Aorta (tissue), 5 donors: ENCODE measurements at regions of chr7 and their contacts with region 1.

Region 1: GRCh38 chr7:6706677-6707544 is at the start of gene ZNF12:
- DNase-seq: peak; percentile 99
- ATAC-seq: peak; percentile 99
- H3K4me3 ChIP-seq: peak within 1 kb of the TSS; percentile 73 to 96
- H3K27ac ChIP-seq: peak within 1 kb of the TSS in 1 of 2 donors; percentile 22
- H3K4me1 ChIP-seq: no peaks in the 10 kb centered on the region
- H3K27me3 ChIP-seq: no peaks in the 10 kb centered on the region
- total RNA-seq, gene ZNF12: 23.5 to 26.7 TPM

Region 2: GRCh38 chr7:6430271-6430940 is 276.5 kb before region 1 on chr7:
- intact Hi-C with region 1: no loop called
- DNase-seq: no peak
- ATAC-seq: no peak
- H3K4me3 ChIP-seq: no peak overlapping the region
- H3K27ac ChIP-seq: no peak overlapping the region
- H3K4me1 ChIP-seq: no peaks in the 10 kb centered on the region
- H3K27me3 ChIP-seq: no peaks in the 10 kb centered on the region

Region 3: GRCh38 chr7:6637544-6638229 is 69.2 kb before region 1 on chr7:
- intact Hi-C with region 1: loop called in 1 of 2 experiments (anchors 2 kb)
- DNase-seq: no peak
- ATAC-seq: no peak
- H3K4me3 ChIP-seq: peak overlapping the region; percentile 81 to 94
- H3K27ac ChIP-seq: no peak overlapping the region
- H3K4me1 ChIP-seq: no peaks in the 10 kb centered on the region
- H3K27me3 ChIP-seq: no peaks in the 10 kb centered on the region

Region 4: GRCh38 chr7:6729492-6730342 is 22.8 kb after region 1 on chr7:
- intact Hi-C with region 1: loop called in 1 of 2 experiments (anchors 2 kb)
- DNase-seq: peak; percentile 96 to 98
- ATAC-seq: peak; percentile 100
- H3K4me3 ChIP-seq: peak overlapping the region; percentile 42 to 74
- H3K27ac ChIP-seq: peak overlapping the region in 1 of 2 donors; percentile 26
- H3K4me1 ChIP-seq: no peaks in the 10 kb centered on the region
- H3K27me3 ChIP-seq: no peaks in the 10 kb centered on the region